MCF 10A (cell line): ENCODE measurements at regions of chr5 and their contacts with region 1.

Region 1: DNA sequence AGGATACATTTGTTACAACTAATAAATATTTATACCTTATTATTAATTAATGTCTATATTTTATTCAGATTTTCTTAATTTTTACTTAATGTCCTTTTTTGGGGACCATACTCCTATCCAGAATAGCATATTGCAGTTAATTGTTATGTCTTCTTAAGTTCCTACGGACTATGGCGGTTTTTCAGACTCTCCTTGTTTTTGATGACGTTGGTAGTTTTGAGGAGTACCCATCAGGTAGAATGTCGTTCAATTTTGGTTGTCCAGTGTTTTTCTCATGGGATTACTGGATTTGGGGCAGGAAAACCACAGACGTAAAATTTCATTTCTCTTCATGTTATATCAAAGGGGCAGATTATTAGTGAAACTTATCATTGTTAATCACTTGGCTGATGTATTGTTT is 223.7 kb downstream of the ISL1 start:
- DNase-seq: no peak
- H3K4me3 Mint-ChIP-seq: no peak overlapping the region
- H3K27ac Mint-ChIP-seq: no peak overlapping the region
- H3K4me1 Mint-ChIP-seq: no peaks in the 10 kb centered on the region
- H3K27me3 Mint-ChIP-seq: peaks cover 37% of the 10 kb centered on the region
- CTCF ChIP-seq: no peak

Region 2: GRCh38 chr5:51582871-51583394 is 24.0 kb before region 1 on chr5:
- CTCF ChIA-PET with region 1: no interaction called
- POLR2A ChIA-PET with region 1: no interaction called
- intact Hi-C with region 1: no loop called
- DNase-seq: no peak
- H3K4me3 Mint-ChIP-seq: no peak overlapping the region
- H3K27ac Mint-ChIP-seq: no peak overlapping the region
- H3K4me1 Mint-ChIP-seq: no peaks in the 10 kb centered on the region
- H3K27me3 Mint-ChIP-seq: peaks cover 33% of the 10 kb centered on the region
- CTCF ChIP-seq: no peak

Region 3: DNA sequence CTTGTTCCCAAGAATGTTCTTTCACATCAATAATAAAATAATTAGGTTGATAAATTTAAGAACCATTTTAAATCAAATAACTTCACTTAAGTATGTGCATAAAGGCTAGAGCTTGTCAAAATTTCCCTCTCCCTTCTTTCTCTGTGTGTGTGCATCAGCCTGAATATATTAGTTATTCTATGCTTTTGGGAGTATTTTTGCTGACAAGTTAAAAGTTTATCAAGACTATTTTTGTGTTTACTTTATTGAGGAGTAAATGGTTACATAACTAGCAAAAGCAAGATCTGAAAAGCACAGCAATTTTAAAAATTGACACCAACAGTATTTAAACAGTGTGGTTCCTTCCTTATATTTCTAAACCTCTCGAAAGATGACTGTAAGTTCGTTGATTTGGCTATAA is 38.1 kb after region 1 on chr5:
- CTCF ChIA-PET with region 1: no interaction called
- POLR2A ChIA-PET with region 1: no interaction called
- intact Hi-C with region 1: no loop called
- DNase-seq: no peak
- H3K4me3 Mint-ChIP-seq: no peak overlapping the region
- H3K27ac Mint-ChIP-seq: no peak overlapping the region
- H3K4me1 Mint-ChIP-seq: no peaks in the 10 kb centered on the region
- H3K27me3 Mint-ChIP-seq: no peaks in the 10 kb centered on the region
- CTCF ChIP-seq: no peak

Region 4: DNA sequence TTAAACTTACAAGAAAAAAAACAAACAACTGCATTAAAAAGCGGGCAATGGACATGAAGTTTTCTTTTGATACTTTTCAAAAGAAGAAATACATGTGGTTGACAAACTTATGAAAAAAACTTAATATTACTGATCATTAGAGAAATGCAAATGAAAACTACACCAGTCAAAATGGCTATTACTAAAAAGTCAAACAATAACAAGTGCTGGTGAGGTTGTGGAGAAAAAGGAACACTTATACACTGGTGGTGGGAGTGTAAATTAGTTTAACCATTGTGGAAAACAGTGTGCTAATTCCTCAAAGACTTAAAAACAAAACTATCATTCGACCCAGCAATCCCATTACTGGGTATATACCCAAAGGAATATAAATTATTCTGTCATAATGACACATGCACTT is 87.9 kb after region 1 on chr5:
- CTCF ChIA-PET with region 1: no interaction called
- POLR2A ChIA-PET with region 1: no interaction called
- intact Hi-C with region 1: no loop called
- DNase-seq: no peak
- H3K4me3 Mint-ChIP-seq: no peak overlapping the region
- H3K27ac Mint-ChIP-seq: no peak overlapping the region
- H3K4me1 Mint-ChIP-seq: no peaks in the 10 kb centered on the region
- H3K27me3 Mint-ChIP-seq: no peaks in the 10 kb centered on the region
- CTCF ChIP-seq: no peak

Region 5: DNA sequence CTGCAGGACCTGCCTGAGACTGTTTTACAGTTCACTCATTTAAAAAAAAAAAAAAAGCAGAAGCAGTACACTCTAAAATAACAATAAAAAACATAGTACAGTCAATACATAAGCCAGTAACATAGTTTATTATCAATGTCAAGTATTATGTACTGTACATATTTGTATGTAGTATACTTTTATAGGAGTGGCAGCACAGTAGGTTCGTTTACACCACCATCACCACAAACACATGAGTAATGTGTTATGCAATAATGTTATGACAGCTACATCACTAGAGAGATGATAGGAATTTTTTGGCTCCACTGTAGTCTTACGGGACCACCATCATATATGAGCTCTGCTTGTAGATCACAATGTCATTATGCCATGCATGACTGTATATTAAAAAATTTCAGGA is 239.1 kb after region 1 on chr5:
- CTCF ChIA-PET with region 1: interaction called, 3 read pairs
- POLR2A ChIA-PET with region 1: interaction called, 3 read pairs
- intact Hi-C with region 1: loop called (anchors 2 kb)
- DNase-seq: peak; percentile 13
- H3K4me3 Mint-ChIP-seq: no peak overlapping the region
- H3K27ac Mint-ChIP-seq: no peak overlapping the region
- H3K4me1 Mint-ChIP-seq: no peaks in the 10 kb centered on the region
- H3K27me3 Mint-ChIP-seq: no peaks in the 10 kb centered on the region
- CTCF ChIP-seq: no peak

Region 6: DNA sequence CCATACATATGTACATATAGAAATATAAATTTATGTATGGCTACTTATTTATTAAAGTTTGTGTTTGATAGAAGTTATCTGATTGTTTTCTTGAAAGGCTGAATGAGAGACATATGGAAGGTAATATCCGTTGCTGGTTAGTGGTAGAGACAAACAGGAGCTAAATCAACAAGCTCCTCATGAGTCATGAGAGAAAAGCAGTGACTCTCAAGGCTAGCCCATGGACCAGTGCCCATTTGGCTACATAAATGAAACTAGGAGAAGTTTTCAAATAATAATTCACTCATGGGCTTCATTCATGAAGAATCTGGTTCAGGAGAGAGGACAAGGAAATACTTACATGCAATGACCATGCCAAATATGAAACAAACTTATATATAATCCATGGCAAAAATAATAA is 676.3 kb after region 1 on chr5:
- CTCF ChIA-PET with region 1: no interaction called
- POLR2A ChIA-PET with region 1: no interaction called
- intact Hi-C with region 1: no loop called
- DNase-seq: peak; percentile 29
- H3K4me3 Mint-ChIP-seq: no peak overlapping the region
- H3K27ac Mint-ChIP-seq: no peak overlapping the region
- H3K4me1 Mint-ChIP-seq: no peaks in the 10 kb centered on the region
- H3K27me3 Mint-ChIP-seq: no peaks in the 10 kb centered on the region
- CTCF ChIP-seq: no peak